Endothelial cell of umbilical vein (primary cell): ENCODE measurements at regions of chr17 and their contacts with region 1.

Region 1: DNA sequence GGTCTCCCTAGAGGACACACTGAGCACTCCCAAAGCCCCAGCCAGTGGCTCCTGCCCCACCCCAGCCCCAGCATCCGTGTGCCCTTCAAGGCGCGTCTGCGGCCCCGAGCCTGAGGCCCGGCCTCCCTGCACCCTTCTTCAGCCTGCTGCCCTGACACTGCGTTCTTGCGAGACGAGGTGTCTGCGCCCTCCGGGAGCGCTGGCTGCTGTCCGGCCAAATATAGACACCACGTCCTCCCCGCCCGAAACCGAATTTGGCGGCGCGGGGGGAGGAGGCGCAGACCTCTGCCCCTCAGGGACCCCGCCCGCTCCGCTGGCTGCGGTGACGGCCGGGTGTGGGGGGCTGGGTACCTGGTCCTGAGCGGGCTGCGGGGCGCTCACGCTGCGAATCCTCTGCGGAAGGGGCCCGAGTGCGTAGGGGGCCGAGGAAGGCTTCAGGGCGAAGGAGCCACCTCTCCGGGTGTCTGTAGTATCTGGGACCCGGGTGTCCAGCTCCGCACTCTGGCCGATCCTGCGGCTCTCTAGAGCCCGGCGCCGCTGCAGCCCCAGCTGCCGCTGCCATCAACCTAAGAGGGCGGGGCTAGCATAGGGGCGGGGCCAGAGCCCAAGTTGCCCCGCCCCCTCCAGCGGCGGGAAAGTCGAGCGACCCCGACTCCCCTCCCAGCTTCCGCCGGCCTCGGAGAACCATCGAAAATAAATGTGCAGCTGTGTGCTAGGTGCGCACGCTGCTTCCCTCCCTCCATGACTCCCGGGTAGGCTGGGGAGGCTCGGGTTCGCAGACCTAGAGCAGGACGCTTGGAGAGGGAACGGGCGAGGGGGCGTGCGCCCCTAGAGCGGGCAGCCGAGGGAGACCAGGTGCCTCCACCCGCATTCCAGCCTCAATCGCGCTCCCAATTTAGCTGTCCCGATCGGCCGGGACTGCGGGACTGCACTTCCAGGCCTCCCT is at the start of gene CORO6:
- DNase-seq: peak; percentile 50
- H3K4me3 ChIP-seq: peak within 1 kb of the TSS; percentile 31 to 73 (median 71)
- H3K27ac ChIP-seq: no peak within 1 kb of the TSS
- H3K4me1 ChIP-seq: peaks cover 11% of the 10 kb centered on the region
- H3K27me3 ChIP-seq: no peaks in the 10 kb centered on the region
- CTCF ChIP-seq: no peak
- POLR2A ChIP-seq: no peak
- total RNA-seq, gene CORO6: 7.8 and 10.7 TPM in 2 replicates

Region 2: DNA sequence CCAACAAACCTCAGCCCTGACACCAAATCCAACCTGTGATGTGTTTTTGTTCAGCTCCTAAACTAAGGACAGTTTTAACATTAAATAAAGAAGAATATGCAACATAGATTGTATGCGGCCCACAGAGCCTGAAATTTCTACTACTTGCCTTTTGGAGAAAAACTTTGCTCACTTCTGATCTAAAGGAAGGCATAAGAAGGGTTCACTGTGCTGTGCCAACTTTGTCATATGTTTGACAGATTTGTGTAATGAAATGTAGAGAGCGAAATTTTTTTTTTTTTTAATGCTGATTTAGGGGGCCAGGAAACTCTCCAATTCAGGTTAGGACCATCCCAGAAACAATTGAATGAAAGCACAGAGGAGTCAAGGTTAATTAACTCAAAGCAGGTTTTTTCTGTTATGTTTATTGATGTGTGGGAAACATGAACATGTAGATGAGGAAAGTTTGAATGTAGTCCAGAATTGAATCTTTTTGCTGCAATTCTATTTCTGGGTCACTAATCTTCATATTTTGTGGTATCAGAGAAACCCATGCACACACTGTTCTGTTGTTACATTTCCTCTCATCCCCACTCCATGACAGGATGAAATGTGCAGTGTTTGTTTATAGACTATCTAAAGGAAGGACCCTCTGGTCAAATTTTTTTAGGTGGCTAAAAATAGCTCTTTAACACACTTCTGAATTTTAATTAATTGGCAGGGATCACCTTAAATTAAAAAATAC is 161.0 kb before region 1 on chr17:
- CTCF ChIA-PET with region 1: no interaction called
- POLR2A ChIA-PET with region 1: no interaction called
- dilution Hi-C with region 1: no loop called
- intact Hi-C with region 1: no loop called
- DNase-seq: no peak
- H3K4me3 ChIP-seq: no peak overlapping the region
- H3K27ac ChIP-seq: no peak overlapping the region
- H3K4me1 ChIP-seq: no peaks in the 10 kb centered on the region
- H3K27me3 ChIP-seq: no peaks in the 10 kb centered on the region
- CTCF ChIP-seq: no peak
- POLR2A ChIP-seq: no peak

Region 3: DNA sequence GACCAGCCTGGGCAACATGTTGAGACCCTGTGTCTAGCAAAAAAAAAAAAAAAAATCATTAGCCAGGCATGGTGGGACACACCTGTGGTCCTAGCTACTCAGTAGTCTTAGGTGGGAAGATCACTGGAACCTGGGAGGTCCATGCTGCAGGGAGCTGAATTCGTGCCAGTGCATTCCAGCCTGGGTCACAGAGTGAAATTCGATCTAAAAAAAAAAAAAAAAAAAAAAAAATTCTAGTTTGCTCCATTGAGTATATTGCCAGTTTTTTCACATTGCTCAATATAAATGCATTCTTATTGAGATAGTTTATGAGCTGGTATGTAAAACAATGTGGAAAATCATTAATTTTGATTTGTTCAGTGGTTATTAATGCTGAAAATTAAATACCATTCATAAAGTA is 107.8 kb before region 1 on chr17:
- CTCF ChIA-PET with region 1: no interaction called
- POLR2A ChIA-PET with region 1: no interaction called
- dilution Hi-C with region 1: no loop called
- intact Hi-C with region 1: no loop called
- DNase-seq: no peak
- H3K4me3 ChIP-seq: no peak overlapping the region
- H3K27ac ChIP-seq: no peak overlapping the region
- H3K4me1 ChIP-seq: peaks cover 9% of the 10 kb centered on the region
- H3K27me3 ChIP-seq: no peaks in the 10 kb centered on the region
- CTCF ChIP-seq: no peak
- POLR2A ChIP-seq: no peak

Region 4: GRCh38 chr17:29544066-29544465 is 78.5 kb before region 1 on chr17:
- CTCF ChIA-PET with region 1: no interaction called
- POLR2A ChIA-PET with region 1: no interaction called
- dilution Hi-C with region 1: no loop called
- intact Hi-C with region 1: no loop called
- DNase-seq: no peak
- H3K4me3 ChIP-seq: no peak overlapping the region
- H3K27ac ChIP-seq: no peak overlapping the region
- H3K4me1 ChIP-seq: no peaks in the 10 kb centered on the region
- H3K27me3 ChIP-seq: no peaks in the 10 kb centered on the region
- CTCF ChIP-seq: no peak
- POLR2A ChIP-seq: no peak

Region 5: GRCh38 chr17:30021708-30022317 is 399.2 kb after region 1 on chr17:
- CTCF ChIA-PET with region 1: interaction called, 30 read pairs
- POLR2A ChIA-PET with region 1: no interaction called
- dilution Hi-C with region 1: no loop called
- intact Hi-C with region 1: loop called (anchors 2 kb)
- DNase-seq: peak; percentile 71
- H3K4me3 ChIP-seq: no peak overlapping the region
- H3K27ac ChIP-seq: no peak overlapping the region
- H3K4me1 ChIP-seq: peaks cover 2% of the 10 kb centered on the region
- H3K27me3 ChIP-seq: no peaks in the 10 kb centered on the region
- CTCF ChIP-seq: peak; percentile 58 to 59
- POLR2A ChIP-seq: no peak